ENCODE measurements at regions of chr13 and their contacts with region 1.

Region 1: DNA sequence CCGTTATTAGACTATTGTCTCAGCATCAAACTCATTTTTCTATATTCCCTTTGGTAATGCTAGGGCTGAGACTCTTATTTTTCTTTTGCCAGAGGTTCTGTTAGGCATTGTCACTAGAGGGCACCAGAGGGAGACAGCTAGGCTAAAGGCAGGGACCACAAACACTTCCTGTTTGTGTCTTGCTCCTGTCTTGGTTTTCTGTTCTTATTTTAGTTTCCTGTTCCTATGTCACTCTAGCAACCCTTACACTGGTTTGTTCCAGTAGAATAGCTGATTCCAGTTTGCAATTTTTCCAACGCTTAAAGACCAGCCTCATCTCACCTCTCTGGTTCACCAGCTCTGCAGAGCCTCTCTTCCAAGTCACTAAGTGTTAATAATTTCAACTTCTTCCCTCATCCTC is 772.0 kb downstream of the DIAPH3 start:
- DNase-seq: peak; percentile 30
- H3K4me3 ChIP-seq: no peak overlapping the region; a peak in 1 of 4 replicates
- H3K27ac ChIP-seq: peak overlapping the region in 1 of 2 experiments; percentile 67; a peak in 1 of 4 replicates
- H3K4me1 ChIP-seq: peaks cover 0 to 17% of the 10 kb centered on the region in 2 experiments; a peak in 1 of 4 replicates
- H3K27me3 ChIP-seq: no peaks in the 10 kb centered on the region
- CTCF ChIP-seq: peak; percentile 93
- EP300 ChIP-seq: no peak
- RAD21 ChIP-seq: peak; percentile 84

Region 2: DNA sequence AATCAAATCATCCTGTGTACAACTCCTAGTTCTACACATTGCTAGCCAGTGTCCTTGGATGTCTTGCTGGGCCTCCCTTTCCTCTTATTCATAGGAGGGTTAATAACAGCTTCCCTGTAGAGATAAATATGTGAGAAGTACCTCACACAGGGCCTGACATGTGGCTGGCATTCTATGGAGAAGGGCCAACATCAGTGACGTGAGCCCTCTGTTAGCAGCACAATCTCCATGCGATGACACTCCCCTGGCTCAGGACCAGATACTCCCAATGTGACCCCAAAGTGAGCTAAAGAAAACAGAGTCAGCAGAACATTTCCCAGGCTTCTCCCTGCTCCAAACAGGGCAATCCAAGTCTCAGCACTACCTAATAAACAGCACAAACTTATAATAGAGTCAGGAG is 46.4 kb before region 1 on chr13:
- CTCF ChIA-PET with region 1: no interaction called
- POLR2A ChIA-PET with region 1: no interaction called
- DNase-seq: no peak
- H3K4me3 ChIP-seq: no peak overlapping the region
- H3K27ac ChIP-seq: peak overlapping the region in 1 of 2 experiments; percentile 72; a peak in 1 of 4 replicates
- H3K4me1 ChIP-seq: peaks cover 0 to 2% of the 10 kb centered on the region in 2 experiments; a peak in 1 of 4 replicates
- H3K27me3 ChIP-seq: no peaks in the 10 kb centered on the region
- CTCF ChIP-seq: no peak
- EP300 ChIP-seq: no peak
- RAD21 ChIP-seq: no peak

Region 3: DNA sequence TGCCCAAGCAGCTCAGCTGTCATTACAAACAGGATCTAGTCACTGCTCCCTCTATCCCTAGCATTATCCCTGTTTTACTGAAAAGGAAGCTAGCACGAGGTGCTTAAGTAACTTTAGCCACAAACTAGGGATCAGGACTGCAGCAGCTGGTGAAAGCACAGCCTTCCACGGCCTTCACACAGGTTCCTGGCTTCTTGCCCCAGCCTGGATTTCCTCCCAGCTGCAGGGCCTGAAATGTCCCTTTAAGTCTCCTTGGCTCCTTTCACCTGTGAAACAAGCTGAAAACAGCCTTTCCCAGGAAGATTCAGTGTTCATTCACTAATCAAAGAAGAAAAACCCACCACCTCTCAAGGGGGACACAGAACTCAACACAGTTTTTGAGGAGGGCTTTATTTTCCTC is 17.5 kb after region 1 on chr13:
- CTCF ChIA-PET with region 1: interaction called, 12 read pairs
- POLR2A ChIA-PET with region 1: no interaction called
- DNase-seq: no peak
- H3K4me3 ChIP-seq: no peak overlapping the region
- H3K27ac ChIP-seq: no peak overlapping the region
- H3K4me1 ChIP-seq: peaks cover 3 to 10% of the 10 kb centered on the region in 2 experiments; a peak in 2 of 4 replicates
- H3K27me3 ChIP-seq: no peaks in the 10 kb centered on the region
- CTCF ChIP-seq: no peak
- EP300 ChIP-seq: no peak
- RAD21 ChIP-seq: no peak

Region 4: DNA sequence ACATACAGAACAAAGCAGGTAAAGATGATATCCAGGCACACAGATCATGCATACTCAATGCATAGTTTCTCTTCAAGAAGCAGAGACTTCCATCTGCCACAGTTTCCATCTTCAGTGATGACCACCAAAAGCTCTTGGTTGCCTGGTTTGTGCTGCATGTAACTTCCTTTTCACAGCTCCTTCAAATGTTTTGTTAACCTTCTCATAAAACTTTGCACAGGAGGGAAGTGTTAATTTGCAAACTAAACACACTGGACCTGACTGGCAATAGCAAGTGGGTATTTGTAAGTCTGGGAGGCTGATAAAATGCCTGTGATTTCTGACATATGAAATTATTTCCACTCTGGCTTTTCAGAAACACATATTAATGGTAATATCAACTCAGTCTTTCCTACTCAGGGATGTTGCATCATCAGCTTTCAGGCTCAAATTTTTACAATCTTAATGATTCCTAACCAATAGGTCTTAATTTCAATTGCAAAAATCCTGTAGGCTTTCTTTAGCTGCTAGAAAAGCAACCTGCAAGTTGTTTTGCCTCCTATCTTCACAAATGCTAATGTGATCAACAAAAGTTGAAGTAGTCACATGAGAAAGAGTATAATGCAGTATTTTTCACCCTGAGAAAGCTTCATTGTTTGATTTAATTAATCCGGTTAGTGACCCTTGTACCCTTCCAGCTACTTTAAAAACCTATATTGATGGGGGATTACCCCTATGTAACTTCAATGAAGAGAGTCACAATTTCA is 196.4 kb after region 1 on chr13:
- CTCF ChIA-PET with region 1: no interaction called
- POLR2A ChIA-PET with region 1: no interaction called
- DNase-seq: no peak
- H3K4me3 ChIP-seq: no peak overlapping the region
- H3K27ac ChIP-seq: no peak overlapping the region
- H3K4me1 ChIP-seq: peaks cover 0 to 11% of the 10 kb centered on the region in 2 experiments; a peak in 2 of 4 replicates
- H3K27me3 ChIP-seq: no peaks in the 10 kb centered on the region
- CTCF ChIP-seq: no peak
- EP300 ChIP-seq: no peak
- RAD21 ChIP-seq: no peak

Region 5: DNA sequence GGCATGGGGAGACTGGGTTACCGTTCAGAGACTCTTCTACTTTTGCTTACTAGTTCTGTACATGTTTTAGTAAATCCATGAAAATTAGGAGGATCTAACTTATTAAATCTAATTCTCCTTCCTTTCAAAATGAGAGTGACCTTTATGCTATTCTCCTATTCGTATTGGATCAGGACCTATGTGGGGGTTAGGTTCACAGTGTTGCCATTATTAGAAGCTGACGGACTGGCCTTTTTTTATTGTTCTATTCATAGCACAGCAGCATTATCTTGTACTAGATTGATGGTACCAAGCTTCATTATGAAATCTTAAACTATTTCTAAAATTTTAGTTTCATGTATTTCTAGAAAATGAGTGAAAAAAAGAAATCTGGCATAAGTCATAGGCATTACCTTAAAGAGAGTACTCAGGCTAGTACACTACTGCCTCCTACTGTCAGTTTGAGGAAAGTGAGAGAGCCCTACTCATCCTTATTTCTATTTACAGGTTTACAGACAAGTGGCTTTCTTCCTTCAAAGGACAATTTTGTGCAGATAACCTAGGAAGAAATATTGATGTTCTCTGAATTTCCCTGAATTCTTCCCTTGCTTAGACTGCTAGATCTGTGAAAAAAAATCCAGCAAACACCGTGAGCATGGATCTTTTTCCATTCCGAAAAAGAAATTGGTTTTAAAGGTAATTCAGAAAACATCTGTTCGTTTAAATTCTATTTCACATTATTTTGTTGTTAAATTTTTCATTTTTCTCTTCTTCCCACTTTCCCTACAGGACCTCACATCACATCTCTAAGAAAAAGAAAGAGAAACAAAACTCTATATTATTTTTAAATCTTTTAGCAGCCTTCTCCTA is 286.5 kb after region 1 on chr13:
- CTCF ChIA-PET with region 1: interaction called, 28 read pairs
- POLR2A ChIA-PET with region 1: no interaction called
- DNase-seq: peak; percentile 55
- H3K4me3 ChIP-seq: no peak overlapping the region; a peak in 1 of 4 replicates
- H3K27ac ChIP-seq: peak overlapping the region in 1 of 2 experiments; percentile 81; a peak in 2 of 4 replicates
- H3K4me1 ChIP-seq: peaks cover 7 to 31% of the 10 kb centered on the region in 2 experiments; a peak in 3 of 4 replicates
- H3K27me3 ChIP-seq: no peaks in the 10 kb centered on the region
- CTCF ChIP-seq: peak; percentile 94
- EP300 ChIP-seq: no peak
- RAD21 ChIP-seq: peak; percentile 95